Heart right ventricle (tissue), 16 donors: ENCODE measurements at regions of chr6 and their contacts with region 1.

Region 1: DNA sequence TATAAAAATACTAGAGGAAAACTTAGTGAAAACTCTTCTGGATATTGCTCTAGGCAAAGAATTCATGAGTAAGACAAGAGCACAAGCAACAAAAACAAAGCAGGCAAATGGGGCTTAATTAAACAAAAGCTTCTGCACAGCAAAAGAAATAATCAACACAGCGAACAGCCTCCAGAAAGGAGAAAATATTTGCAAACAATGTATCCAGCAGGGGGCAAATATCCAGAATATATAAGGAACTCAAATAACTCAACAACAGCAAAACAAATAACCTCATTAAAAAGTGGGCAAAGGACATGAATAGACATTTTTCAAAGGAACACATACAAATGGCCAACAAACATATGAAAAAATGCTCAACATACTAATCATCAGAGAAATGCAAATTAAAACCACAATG is 17.1 kb upstream of the HECA start:
- DNase-seq: no peak
- ATAC-seq: no peak
- H3K4me3 ChIP-seq: no peak overlapping the region
- H3K27ac ChIP-seq: no peak overlapping the region
- H3K4me1 ChIP-seq: no peaks in the 10 kb centered on the region
- H3K27me3 ChIP-seq: no peaks in the 10 kb centered on the region
- CTCF ChIP-seq: no peak

Region 2: DNA sequence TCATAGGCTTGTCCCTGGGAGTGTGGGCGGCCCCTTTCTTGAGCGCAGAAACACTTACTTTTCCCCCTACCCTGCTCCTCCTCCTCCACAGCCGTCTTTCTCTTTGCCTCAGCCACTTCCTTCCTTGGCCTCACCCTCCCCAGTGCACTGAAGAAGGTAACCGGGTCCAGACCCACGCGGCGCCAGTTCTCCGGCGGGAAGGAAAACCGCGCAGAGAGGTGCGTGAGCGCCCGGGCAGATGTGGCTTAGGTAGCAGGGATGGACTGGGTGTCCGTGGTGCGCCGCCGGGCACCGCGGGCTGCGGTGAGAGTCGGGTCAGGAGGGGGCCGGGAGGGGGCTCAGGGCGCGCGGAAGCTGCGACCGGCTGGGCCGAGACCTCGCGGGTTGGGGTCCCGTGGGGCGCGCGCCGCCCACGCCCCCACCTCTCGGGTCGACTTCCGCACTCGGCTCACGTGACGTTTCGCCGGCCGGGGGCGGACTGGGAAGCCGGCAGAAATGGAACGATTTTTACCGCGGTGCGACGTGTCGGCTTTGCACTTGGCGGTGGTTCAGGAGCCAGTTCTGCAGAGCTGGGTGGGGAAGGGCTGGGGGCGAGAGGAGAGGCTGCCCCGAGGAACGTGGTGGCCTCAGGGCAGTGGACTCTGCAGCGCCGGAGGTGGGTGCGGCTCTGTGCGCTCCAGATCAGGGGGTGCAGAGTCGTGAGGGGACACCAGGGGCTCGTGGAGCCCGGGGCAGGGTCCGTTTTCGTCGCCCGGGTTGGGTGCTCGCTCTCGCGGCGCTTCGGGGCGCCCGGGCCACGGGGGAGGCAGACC is 88.9 kb before region 1 on chr6 and contains the start of gene ABRACL:
- intact Hi-C with region 1: loop called in 1 of 10 experiments (anchors 10 kb)
- DNase-seq: peak; percentile 61 to 64
- ATAC-seq: peak; percentile 71 to 84 (median 78)
- H3K4me3 ChIP-seq: peak within 1 kb of the TSS; percentile 85 to 97 (median 95)
- H3K27ac ChIP-seq: peak within 1 kb of the TSS; percentile 38 to 96 (median 89)
- H3K4me1 ChIP-seq: peaks cover 0 to 49% (median 18%) of the 10 kb centered on the region in 9 donors
- H3K27me3 ChIP-seq: no peaks in the 10 kb centered on the region
- CTCF ChIP-seq: no peak
- total RNA-seq, gene ABRACL: 2.6 to 13.9 (median 5.2) TPM